ENCODE measurements at regions of chr12 and their contacts with region 1.

Region 1: GRCh38 chr12:7933255-7933729 is 2.7 kb downstream of the SLC2A3 start:
- DNase-seq: peak; percentile 48
- ATAC-seq: peak; percentile 86
- H3K4me3 Mint-ChIP-seq: no peak overlapping the region
- H3K27ac Mint-ChIP-seq: no peak overlapping the region
- H3K4me1 Mint-ChIP-seq: no peaks in the 10 kb centered on the region
- H3K27me3 Mint-ChIP-seq: no peaks in the 10 kb centered on the region
- CTCF ChIP-seq: no peak

Region 2: DNA sequence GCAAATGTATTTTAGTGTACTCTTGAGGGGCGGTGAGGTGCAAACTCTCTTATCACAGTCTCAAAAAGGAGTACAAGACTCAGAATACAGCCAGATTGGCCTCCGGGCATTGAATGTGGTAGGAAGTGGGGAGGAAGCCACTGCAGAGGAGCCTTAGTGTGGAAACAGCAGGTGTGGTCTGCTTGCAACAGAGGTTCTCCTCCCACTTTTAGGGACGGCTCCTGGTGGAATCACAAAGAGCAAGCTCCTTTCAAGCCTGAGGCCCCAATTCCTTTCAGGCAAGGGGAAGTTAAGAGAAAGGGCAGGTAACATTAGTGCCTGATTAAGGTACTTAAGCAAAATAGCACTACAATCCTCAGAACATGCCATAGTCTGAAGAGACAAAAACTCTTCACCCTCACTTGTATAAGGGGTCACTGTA is 26.4 kb after region 1 on chr12:
- CTCF ChIA-PET with region 1: interaction called, 131 read pairs
- POLR2A ChIA-PET with region 1: interaction called, 485 read pairs
- intact Hi-C with region 1: loop called (anchors 1 kb)
- DNase-seq: peak; percentile 22
- ATAC-seq: no peak
- H3K4me3 Mint-ChIP-seq: peak overlapping the region; percentile 87
- H3K27ac Mint-ChIP-seq: peak overlapping the region; percentile 94
- H3K4me1 Mint-ChIP-seq: peaks cover 37% of the 10 kb centered on the region
- H3K27me3 Mint-ChIP-seq: no peaks in the 10 kb centered on the region
- CTCF ChIP-seq: no peak

Region 3: GRCh38 chr12:7981446-7981845 is 48.2 kb after region 1 on chr12:
- CTCF ChIA-PET with region 1: interaction called, 4 read pairs
- POLR2A ChIA-PET with region 1: interaction called, 18 read pairs
- intact Hi-C with region 1: loop called (anchors 1 kb)
- DNase-seq: no peak
- ATAC-seq: no peak
- H3K4me3 Mint-ChIP-seq: no peak overlapping the region
- H3K27ac Mint-ChIP-seq: no peak overlapping the region
- H3K4me1 Mint-ChIP-seq: peaks cover 20% of the 10 kb centered on the region
- H3K27me3 Mint-ChIP-seq: no peaks in the 10 kb centered on the region
- CTCF ChIP-seq: no peak

Region 4: GRCh38 chr12:7995266-7995963 is 62.1 kb after region 1 on chr12:
- CTCF ChIA-PET with region 1: interaction called, 98 read pairs
- POLR2A ChIA-PET with region 1: interaction called, 77 read pairs
- intact Hi-C with region 1: loop called (anchors 1 kb)
- DNase-seq: peak; percentile 50
- ATAC-seq: peak; percentile 99
- H3K4me3 Mint-ChIP-seq: no peak overlapping the region
- H3K27ac Mint-ChIP-seq: no peak overlapping the region
- H3K4me1 Mint-ChIP-seq: peaks cover 3% of the 10 kb centered on the region
- H3K27me3 Mint-ChIP-seq: no peaks in the 10 kb centered on the region
- CTCF ChIP-seq: peak; percentile 53

Region 5: GRCh38 chr12:8045952-8046944 is 113.0 kb after region 1 on chr12:
- CTCF ChIA-PET with region 1: interaction called, 11 read pairs
- POLR2A ChIA-PET with region 1: no interaction called
- intact Hi-C with region 1: no loop called
- DNase-seq: peak; percentile 60
- ATAC-seq: peak; percentile 74
- H3K4me3 Mint-ChIP-seq: no peak overlapping the region
- H3K27ac Mint-ChIP-seq: no peak overlapping the region
- H3K4me1 Mint-ChIP-seq: peaks cover 16% of the 10 kb centered on the region
- H3K27me3 Mint-ChIP-seq: no peaks in the 10 kb centered on the region
- CTCF ChIP-seq: peak; percentile 70

Measured in activated B cell treated with CpG ODN at 0.5 μM for 24 hours (primary cell).